CD4-positive, alpha-beta memory T cell (primary cell): ENCODE measurements at regions of chr1 and their contacts with region 1.

Region 1: GRCh38 chr1:35557292-35558063 is at the starts of genes KIAA0319L and NCDN:
- DNase-seq: peak; percentile 93 to 97 (median 95)
- H3K4me3 ChIP-seq: peak within 1 kb of the TSS; percentile 92 to 100
- H3K4me3 Mint-ChIP-seq: peak within 1 kb of the TSS; percentile 94 to 99 (median 97)
- H3K27ac ChIP-seq: peak within 1 kb of the TSS; percentile 70
- H3K27ac Mint-ChIP-seq: peak within 1 kb of the TSS; percentile 95 to 100 (median 96)
- H3K4me1 ChIP-seq: peaks cover 52% of the 10 kb centered on the region
- H3K4me1 Mint-ChIP-seq: peaks cover 37 to 77% (median 48%) of the 10 kb centered on the region in 4 donors
- H3K27me3 ChIP-seq: no peaks in the 10 kb centered on the region
- H3K27me3 Mint-ChIP-seq: no peaks in the 10 kb centered on the region
- total RNA-seq, gene KIAA0319L: 79.4 to 82.9 TPM
- total RNA-seq, gene NCDN: 29.7 to 32.2 TPM

Region 2: GRCh38 chr1:35210321-35211119 is 347.0 kb before region 1 on chr1:
- CTCF ChIA-PET with region 1: no interaction called
- POLR2A ChIA-PET with region 1: no interaction called
- intact Hi-C with region 1: no loop called
- DNase-seq: no peak
- H3K4me3 ChIP-seq: no peak overlapping the region
- H3K4me3 Mint-ChIP-seq: no peak overlapping the region
- H3K27ac ChIP-seq: no peak overlapping the region
- H3K27ac Mint-ChIP-seq: peak overlapping the region in 2 of 7 donors; percentile 42 to 46
- H3K4me1 ChIP-seq: no peaks in the 10 kb centered on the region
- H3K4me1 Mint-ChIP-seq: peaks cover 0 to 4% (median 0%) of the 10 kb centered on the region in 4 donors
- H3K27me3 ChIP-seq: no peaks in the 10 kb centered on the region
- H3K27me3 Mint-ChIP-seq: no peaks in the 10 kb centered on the region

Region 3: DNA sequence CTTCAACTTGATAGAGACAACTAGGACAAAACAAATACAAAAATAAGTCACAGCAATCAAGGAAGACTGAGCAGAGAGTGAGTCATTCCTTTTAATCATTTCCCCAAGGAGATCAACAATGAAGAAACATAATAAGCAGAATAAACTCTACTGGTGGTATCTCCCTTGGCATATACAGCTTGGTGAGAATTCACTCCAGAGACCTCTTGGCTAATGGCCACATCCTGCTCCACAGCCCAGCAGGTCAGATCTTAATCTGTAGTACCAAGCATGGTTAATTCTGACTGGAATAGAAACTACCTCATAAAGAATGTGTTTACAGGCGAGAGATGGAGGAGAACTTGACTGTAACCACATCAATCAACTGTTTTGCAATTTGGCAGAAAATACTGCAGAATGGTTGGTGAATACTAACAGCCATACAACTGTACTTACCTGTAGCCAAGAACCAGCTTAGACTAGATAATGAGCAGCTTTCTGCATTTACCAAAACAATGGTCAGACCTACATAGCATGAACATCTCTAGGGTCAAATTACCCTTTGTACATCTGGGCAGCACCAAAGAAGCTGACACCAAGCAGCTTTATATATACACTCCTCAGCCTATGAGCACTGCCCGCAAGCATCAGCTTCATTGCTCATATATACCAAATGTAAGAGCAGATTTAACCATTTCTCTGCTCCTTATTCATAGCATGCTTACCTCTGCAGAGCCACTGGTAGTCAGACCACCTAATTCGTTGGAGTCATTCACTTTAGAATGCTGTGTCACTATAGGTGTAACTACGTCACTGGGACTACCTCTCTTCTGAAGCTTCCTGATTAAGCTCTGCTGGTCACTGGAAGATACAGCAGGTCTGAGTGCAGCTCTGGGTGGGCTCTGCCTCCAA is 51.3 kb before region 1 on chr1:
- CTCF ChIA-PET with region 1: interaction called, 15 read pairs
- POLR2A ChIA-PET with region 1: interaction called, 39 read pairs
- intact Hi-C with region 1: loop called (anchors 5 kb)
- DNase-seq: peak; percentile 78 to 89 (median 82)
- H3K4me3 ChIP-seq: peak overlapping the region in 1 of 2 donors; percentile 39
- H3K4me3 Mint-ChIP-seq: peak overlapping the region; percentile 65 to 88 (median 76)
- H3K27ac ChIP-seq: peak overlapping the region; percentile 59
- H3K27ac Mint-ChIP-seq: peak overlapping the region; percentile 86 to 98 (median 96)
- H3K4me1 ChIP-seq: peaks cover 65% of the 10 kb centered on the region
- H3K4me1 Mint-ChIP-seq: peaks cover 63 to 89% (median 73%) of the 10 kb centered on the region in 4 donors
- H3K27me3 ChIP-seq: no peaks in the 10 kb centered on the region
- H3K27me3 Mint-ChIP-seq: no peaks in the 10 kb centered on the region

Region 4: GRCh38 chr1:35539073-35539823 is 18.2 kb before region 1 on chr1:
- CTCF ChIA-PET with region 1: interaction called, 7 read pairs
- POLR2A ChIA-PET with region 1: interaction called, 34 read pairs
- intact Hi-C with region 1: loop called (anchors 2 kb)
- DNase-seq: peak; percentile 69 to 77 (median 71)
- H3K4me3 ChIP-seq: peak overlapping the region in 1 of 2 donors; percentile 19
- H3K4me3 Mint-ChIP-seq: peak overlapping the region; percentile 75 to 91 (median 80)
- H3K27ac ChIP-seq: peak overlapping the region; percentile 52
- H3K27ac Mint-ChIP-seq: peak overlapping the region; percentile 77 to 96 (median 94)
- H3K4me1 ChIP-seq: peaks cover 69% of the 10 kb centered on the region
- H3K4me1 Mint-ChIP-seq: peaks cover 58 to 90% (median 80%) of the 10 kb centered on the region in 4 donors
- H3K27me3 ChIP-seq: no peaks in the 10 kb centered on the region
- H3K27me3 Mint-ChIP-seq: no peaks in the 10 kb centered on the region

Region 5: GRCh38 chr1:35544978-35545377 is 12.5 kb before region 1 on chr1:
- CTCF ChIA-PET with region 1: interaction called, 7 read pairs
- POLR2A ChIA-PET with region 1: interaction called, 34 read pairs
- intact Hi-C with region 1: no loop called
- DNase-seq: peak; percentile 65 to 68 (median 67)
- H3K4me3 ChIP-seq: no peak overlapping the region
- H3K4me3 Mint-ChIP-seq: peak overlapping the region in 1 of 8 donors; percentile 30
- H3K27ac ChIP-seq: no peak overlapping the region
- H3K27ac Mint-ChIP-seq: peak overlapping the region; percentile 22 to 89 (median 60)
- H3K4me1 ChIP-seq: peaks cover 37% of the 10 kb centered on the region
- H3K4me1 Mint-ChIP-seq: peaks cover 42 to 82% (median 67%) of the 10 kb centered on the region in 4 donors
- H3K27me3 ChIP-seq: no peaks in the 10 kb centered on the region
- H3K27me3 Mint-ChIP-seq: no peaks in the 10 kb centered on the region